Right ventricle myocardium inferior (tissue), 1 donor: ENCODE measurements at regions of chr2 and their contacts with region 1.

Region 1: GRCh38 chr2:160406591-160407392 is 86.8 kb downstream of the RBMS1 start:
- DNase-seq: peak; percentile 86
- ATAC-seq: peak; percentile 49

Region 2: GRCh38 chr2:160278879-160279177 is 128.0 kb before region 1 on chr2:
- intact Hi-C with region 1: loop called (anchors 5 kb)
- DNase-seq: no peak
- ATAC-seq: peak; percentile 68